CD4-positive, alpha-beta memory T cell (primary cell): ENCODE measurements at regions of chr5 and their contacts with region 1.

Region 1: DNA sequence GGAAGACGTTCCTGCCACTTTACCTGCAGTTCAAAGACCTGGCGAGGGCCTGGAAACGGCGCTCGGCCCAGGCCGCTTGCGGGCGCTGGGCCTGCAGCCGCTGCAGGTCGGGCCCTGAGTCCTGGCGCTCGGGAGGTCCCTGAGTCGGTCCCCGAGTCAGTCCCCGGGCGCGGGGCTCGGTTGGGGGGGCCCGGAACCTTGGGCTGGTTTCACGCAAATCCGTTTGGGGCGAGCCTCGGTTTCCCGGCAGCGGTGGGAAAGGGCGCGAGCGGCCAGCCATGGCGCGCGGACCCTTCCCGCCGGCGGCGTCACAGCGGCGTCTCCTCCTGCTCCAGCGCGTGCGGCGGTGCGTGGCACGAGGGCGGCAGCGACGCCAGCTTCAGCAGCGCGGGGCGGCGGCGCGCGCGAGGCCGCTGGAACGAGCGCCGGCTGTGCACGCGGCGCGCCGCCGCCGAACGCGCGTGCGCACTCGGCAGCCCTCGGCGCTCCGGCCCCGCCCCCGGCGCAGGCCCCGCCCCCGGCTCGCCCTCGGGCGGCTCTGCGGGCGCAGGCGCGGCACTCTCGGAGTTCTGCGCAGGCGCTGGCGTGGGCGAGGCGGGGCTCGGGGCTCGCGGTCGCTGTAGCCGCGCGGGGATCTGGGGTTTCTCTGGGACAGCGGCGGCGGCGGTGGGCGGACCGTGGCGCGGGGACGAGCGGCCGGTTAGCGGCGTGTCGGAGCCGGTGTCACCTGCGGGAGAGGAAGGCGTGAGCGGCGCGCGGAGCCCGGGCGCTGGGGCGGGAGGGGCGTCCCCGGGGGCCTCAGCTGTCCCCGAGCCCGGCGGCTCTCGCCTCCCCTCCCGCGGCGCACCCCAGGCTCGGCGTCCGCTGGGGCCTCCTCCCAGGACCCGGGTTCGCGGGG is 29.9 kb downstream of the EXOC3 start:
- DNase-seq: peak; percentile 83 to 95 (median 91)
- H3K4me3 ChIP-seq: peak overlapping the region; percentile 50 to 63
- H3K4me3 Mint-ChIP-seq: peak overlapping the region; percentile 76 to 85 (median 82)
- H3K27ac ChIP-seq: peak overlapping the region; percentile 80
- H3K27ac Mint-ChIP-seq: peak overlapping the region in 5 of 7 donors; percentile 9 to 89 (median 77)
- H3K4me1 ChIP-seq: peaks cover 30% of the 10 kb centered on the region
- H3K4me1 Mint-ChIP-seq: peaks cover 6 to 20% (median 15%) of the 10 kb centered on the region in 4 donors
- H3K27me3 ChIP-seq: no peaks in the 10 kb centered on the region
- H3K27me3 Mint-ChIP-seq: peaks cover 1 to 7% of the 10 kb centered on the region in 2 donors

Region 2: GRCh38 chr5:252546-252945 is 220.4 kb before region 1 on chr5:
- CTCF ChIA-PET with region 1: no interaction called
- POLR2A ChIA-PET with region 1: no interaction called
- intact Hi-C with region 1: no loop called
- DNase-seq: no peak
- H3K4me3 ChIP-seq: no peak overlapping the region
- H3K4me3 Mint-ChIP-seq: peak overlapping the region; percentile 52 to 81 (median 62)
- H3K27ac ChIP-seq: peak overlapping the region; percentile 42
- H3K27ac Mint-ChIP-seq: peak overlapping the region; percentile 73 to 92 (median 88)
- H3K4me1 ChIP-seq: peaks cover 12% of the 10 kb centered on the region
- H3K4me1 Mint-ChIP-seq: peaks cover 9 to 26% (median 19%) of the 10 kb centered on the region in 4 donors
- H3K27me3 ChIP-seq: no peaks in the 10 kb centered on the region
- H3K27me3 Mint-ChIP-seq: no peaks in the 10 kb centered on the region

Region 3: DNA sequence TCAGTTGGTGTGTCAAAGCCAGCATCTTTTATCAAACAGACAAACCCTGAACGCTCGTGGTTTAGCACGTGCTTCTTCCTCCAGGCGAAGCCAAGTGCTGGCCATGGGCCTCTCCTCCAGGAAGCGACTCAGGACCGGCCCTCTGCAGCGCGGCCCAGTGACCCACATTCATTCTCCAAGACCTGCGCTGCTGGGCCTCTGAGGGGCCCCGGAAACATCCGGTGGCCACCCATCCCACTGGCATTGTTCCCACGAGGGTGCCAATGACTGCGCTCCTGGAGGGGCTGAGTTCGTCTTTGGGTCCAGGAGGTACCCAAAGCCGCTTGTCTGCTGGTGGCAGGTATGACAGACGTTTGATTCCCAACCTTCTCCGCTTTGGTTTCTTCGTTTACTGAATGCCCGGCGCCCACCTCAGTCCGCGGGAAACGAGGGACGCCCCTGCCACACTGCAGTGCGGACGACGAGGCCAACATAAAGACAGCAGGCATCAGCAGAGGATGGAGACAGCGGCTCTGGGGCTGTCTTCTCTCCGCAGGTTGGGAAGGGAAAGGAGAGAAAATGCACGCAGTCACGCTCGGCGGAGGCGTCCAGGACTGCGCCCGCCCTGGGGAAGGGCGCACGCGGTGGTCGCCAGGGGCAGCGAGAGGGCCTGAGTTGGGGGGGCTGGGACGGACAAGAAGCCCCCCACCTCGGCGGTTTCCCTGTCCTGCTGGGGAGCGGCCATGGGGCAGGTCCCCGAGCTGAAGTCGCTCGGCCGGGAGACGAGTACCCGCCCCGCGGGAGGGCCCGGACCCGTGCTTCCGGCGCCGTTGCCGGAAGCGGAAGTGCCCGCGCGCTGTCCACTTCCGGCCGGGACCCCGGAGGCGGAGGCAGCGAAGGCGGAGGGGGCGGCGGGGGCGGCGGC is 30.3 kb before region 1 on chr5 and contains the start of gene EXOC3:
- CTCF ChIA-PET with region 1: interaction called, 15 read pairs
- POLR2A ChIA-PET with region 1: interaction called, 22 read pairs
- intact Hi-C with region 1: loop called (anchors 2 kb)
- DNase-seq: peak; percentile 62 to 77 (median 69)
- H3K4me3 ChIP-seq: peak within 1 kb of the TSS; percentile 92 to 95
- H3K4me3 Mint-ChIP-seq: peak within 1 kb of the TSS; percentile 94 to 99 (median 96)
- H3K27ac ChIP-seq: peak within 1 kb of the TSS; percentile 77
- H3K27ac Mint-ChIP-seq: peak within 1 kb of the TSS; percentile 91 to 97 (median 95)
- H3K4me1 ChIP-seq: peaks cover 34% of the 10 kb centered on the region
- H3K4me1 Mint-ChIP-seq: peaks cover 17 to 42% (median 34%) of the 10 kb centered on the region in 4 donors
- H3K27me3 ChIP-seq: no peaks in the 10 kb centered on the region
- H3K27me3 Mint-ChIP-seq: no peaks in the 10 kb centered on the region
- total RNA-seq, gene EXOC3: 83.0 to 96.1 TPM

Region 4: GRCh38 chr5:485946-486491 is 13.1 kb after region 1 on chr5:
- CTCF ChIA-PET with region 1: no interaction called
- POLR2A ChIA-PET with region 1: no interaction called
- intact Hi-C with region 1: no loop called
- DNase-seq: no peak
- H3K4me3 ChIP-seq: no peak overlapping the region
- H3K4me3 Mint-ChIP-seq: peak overlapping the region in 2 of 8 donors; percentile 31 to 33
- H3K27ac ChIP-seq: no peak overlapping the region
- H3K27ac Mint-ChIP-seq: peak overlapping the region in 2 of 7 donors; percentile 29 to 48
- H3K4me1 ChIP-seq: no peaks in the 10 kb centered on the region
- H3K4me1 Mint-ChIP-seq: peaks cover 0 to 14% (median 2%) of the 10 kb centered on the region in 4 donors
- H3K27me3 ChIP-seq: no peaks in the 10 kb centered on the region
- H3K27me3 Mint-ChIP-seq: peaks cover 4 to 6% of the 10 kb centered on the region in 2 donors

Region 5: DNA sequence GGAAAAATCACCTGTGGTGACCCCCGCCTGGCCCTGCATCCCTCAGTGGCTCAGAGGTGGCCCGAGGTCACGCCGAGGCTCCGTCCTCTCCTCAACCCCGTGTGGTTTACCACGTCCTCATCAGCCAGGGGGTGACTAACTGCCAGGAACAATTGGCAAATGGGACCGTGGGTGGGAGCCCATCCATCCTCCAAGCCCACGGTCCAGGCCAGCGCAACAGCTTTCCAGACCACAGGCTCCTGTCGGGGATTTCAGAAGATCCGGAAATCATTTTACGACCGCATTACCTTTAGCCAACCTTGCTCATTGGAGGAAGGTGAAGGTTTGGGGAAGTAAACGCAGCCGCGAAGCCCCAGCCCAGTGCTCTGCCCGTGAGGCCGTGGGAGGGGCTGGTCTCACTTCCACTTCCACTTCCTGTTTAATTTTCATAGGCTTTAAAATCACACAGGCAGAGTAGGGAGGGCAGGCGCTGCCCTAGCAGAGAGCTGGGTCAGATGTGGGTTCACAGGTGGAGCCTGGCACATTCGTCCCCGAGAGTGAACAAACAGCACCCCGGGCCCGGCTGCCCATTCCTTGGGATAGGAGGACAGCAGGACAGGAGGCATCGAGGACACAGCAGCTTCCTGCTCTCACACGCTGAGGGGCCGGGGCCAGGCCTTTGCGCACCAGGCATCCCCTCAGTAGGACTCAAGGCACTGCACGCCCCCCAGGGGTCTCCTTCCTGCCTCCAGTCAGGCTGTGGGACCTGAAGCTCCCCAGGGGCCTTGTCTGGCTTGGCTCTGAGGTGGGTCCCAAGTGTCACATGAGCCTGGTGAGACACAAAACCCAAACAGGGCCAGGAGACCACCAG is 71.1 kb after region 1 on chr5:
- CTCF ChIA-PET with region 1: no interaction called
- POLR2A ChIA-PET with region 1: no interaction called
- intact Hi-C with region 1: loop called (anchors 1 kb)
- DNase-seq: peak in 4 of 5 donors; percentile 26 to 41 (median 29)
- H3K4me3 ChIP-seq: peak overlapping the region; percentile 12 to 51
- H3K4me3 Mint-ChIP-seq: peak overlapping the region; percentile 45 to 84 (median 76)
- H3K27ac ChIP-seq: peak overlapping the region; percentile 14
- H3K27ac Mint-ChIP-seq: peak overlapping the region in 5 of 7 donors; percentile 66 to 88 (median 86)
- H3K4me1 ChIP-seq: peaks cover 16% of the 10 kb centered on the region
- H3K4me1 Mint-ChIP-seq: peaks cover 5 to 13% (median 8%) of the 10 kb centered on the region in 4 donors
- H3K27me3 ChIP-seq: peaks cover 4% of the 10 kb centered on the region
- H3K27me3 Mint-ChIP-seq: peaks cover 6 to 8% of the 10 kb centered on the region in 2 donors